ENCODE measurements at regions of chr15 and their contacts with region 1.

Region 1: GRCh38 chr15:90931737-90932659 is at the start of gene HDDC3:
- DNase-seq: peak; percentile 93
- H3K4me3 Mint-ChIP-seq: peak within 1 kb of the TSS; percentile 95
- H3K27ac Mint-ChIP-seq: peak within 1 kb of the TSS; percentile 96
- H3K4me1 Mint-ChIP-seq: peaks cover 35% of the 10 kb centered on the region
- H3K27me3 Mint-ChIP-seq: no peaks in the 10 kb centered on the region
- CTCF ChIP-seq: peak; percentile 87
- total RNA-seq, gene HDDC3: 23.6 and 25.5 TPM in 2 replicates

Region 2: DNA sequence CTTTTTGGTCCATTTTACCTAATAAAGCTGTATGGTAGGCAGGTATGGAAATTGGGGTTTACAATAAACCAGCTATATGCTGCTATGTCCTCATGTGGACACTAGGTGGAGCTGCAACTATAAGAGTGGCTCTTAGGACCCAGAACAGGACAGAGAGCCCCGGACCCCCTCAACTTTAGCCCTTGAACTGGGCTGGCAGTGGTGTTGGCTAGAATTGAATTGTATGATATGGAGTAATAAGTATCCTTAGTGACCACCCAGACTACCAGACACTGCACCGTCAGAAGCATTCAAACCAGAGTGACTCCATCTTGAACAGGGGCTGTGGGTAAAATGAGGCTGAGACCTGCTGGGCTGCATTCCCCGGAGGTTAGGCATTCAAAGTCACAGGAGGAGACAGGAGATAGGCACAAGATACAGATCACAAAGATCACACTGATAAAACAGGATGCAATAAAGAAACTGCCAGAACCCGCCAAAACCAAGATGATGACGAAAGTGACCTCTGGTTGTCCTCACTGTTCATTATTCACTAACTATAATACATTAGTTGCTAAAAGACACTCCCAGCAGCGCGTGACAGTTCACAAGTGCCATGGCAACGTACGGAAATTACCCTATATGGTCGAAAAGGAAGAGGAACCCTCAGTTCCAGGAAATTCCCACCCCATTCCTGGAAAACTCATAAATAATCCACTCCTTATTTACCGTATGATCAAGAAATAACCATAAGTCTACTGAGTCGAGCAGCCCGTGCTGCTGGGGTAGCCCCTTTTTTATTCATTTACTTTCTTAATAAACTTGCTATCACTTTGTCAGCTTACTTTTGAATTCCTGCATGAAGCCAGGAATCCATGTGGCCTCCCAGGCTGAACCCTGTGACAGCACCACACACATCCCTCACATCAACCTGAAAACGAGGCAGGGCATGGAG is 283.6 kb before region 1 on chr15:
- CTCF ChIA-PET with region 1: interaction called, 13 read pairs
- POLR2A ChIA-PET with region 1: interaction called, 5 read pairs
- intact Hi-C with region 1: loop called (anchors 5 kb)
- DNase-seq: peak; percentile 78
- H3K4me3 Mint-ChIP-seq: peak overlapping the region; percentile 20
- H3K27ac Mint-ChIP-seq: no peak overlapping the region
- H3K4me1 Mint-ChIP-seq: peaks cover 7% of the 10 kb centered on the region
- H3K27me3 Mint-ChIP-seq: no peaks in the 10 kb centered on the region
- CTCF ChIP-seq: peak; percentile 90

Region 3: GRCh38 chr15:90902040-90902839 is 29.8 kb before region 1 on chr15:
- CTCF ChIA-PET with region 1: interaction called, 131 read pairs
- POLR2A ChIA-PET with region 1: interaction called, 150 read pairs
- intact Hi-C with region 1: loop called (anchors 1 kb)
- DNase-seq: peak; percentile 81
- H3K4me3 Mint-ChIP-seq: peak overlapping the region; percentile 82
- H3K27ac Mint-ChIP-seq: peak overlapping the region; percentile 57
- H3K4me1 Mint-ChIP-seq: peaks cover 10% of the 10 kb centered on the region
- H3K27me3 Mint-ChIP-seq: no peaks in the 10 kb centered on the region
- CTCF ChIP-seq: peak; percentile 62

Region 4: GRCh38 chr15:90954712-90955671 is 23.0 kb after region 1 on chr15 and contains the start of gene RCCD1:
- CTCF ChIA-PET with region 1: interaction called, 116 read pairs
- POLR2A ChIA-PET with region 1: interaction called, 15 read pairs
- intact Hi-C with region 1: loop called (anchors 2 kb)
- DNase-seq: peak; percentile 97
- H3K4me3 Mint-ChIP-seq: peak within 1 kb of the TSS; percentile 77
- H3K27ac Mint-ChIP-seq: peak within 1 kb of the TSS; percentile 84
- H3K4me1 Mint-ChIP-seq: peaks cover 10% of the 10 kb centered on the region
- H3K27me3 Mint-ChIP-seq: no peaks in the 10 kb centered on the region
- CTCF ChIP-seq: no peak
- total RNA-seq, gene RCCD1: 21.5 and 29.0 TPM in 2 replicates

Region 5: DNA sequence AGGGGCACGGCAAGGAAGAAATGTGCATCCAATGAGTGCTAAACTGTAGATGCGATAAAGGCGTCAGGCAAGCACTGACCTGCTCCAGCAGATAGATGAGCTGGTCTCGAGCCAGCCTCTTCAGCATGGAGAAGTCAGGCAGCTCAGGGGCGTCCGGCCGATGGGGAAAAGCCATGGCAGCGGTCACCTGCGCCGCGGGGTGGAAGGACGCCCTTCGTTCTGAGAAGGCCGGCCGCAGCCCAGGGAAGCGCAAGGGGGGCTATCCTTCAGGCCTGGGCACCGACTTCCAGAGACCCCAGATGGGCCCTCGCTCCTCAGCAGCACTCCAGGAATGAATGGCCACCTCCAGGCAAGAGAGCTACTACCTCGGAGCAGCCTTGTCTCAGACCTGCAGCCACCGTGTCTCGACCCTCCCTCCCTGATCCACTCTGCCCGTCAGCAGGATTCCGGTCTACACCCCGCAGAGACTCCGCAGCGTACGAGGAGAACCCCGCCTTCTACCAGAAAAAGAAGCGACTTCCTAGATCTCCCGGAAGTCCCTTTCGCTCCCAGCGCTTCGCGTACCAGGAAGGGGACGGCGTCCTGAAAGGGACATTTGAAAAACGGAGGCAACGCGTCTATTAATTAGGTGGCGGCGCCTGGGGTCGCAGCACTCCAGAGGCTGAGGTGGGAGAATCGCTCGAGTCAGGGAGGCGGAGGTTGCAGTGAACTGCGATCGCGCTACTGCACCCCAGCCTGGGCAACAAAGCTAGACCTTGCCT is 90.3 kb after region 1 on chr15 and contains the start of gene VPS33B:
- CTCF ChIA-PET with region 1: interaction called, 5 read pairs
- POLR2A ChIA-PET with region 1: interaction called, 11 read pairs
- intact Hi-C with region 1: no loop called
- DNase-seq: peak; percentile 87
- H3K4me3 Mint-ChIP-seq: peak within 1 kb of the TSS; percentile 83
- H3K27ac Mint-ChIP-seq: peak within 1 kb of the TSS; percentile 83
- H3K4me1 Mint-ChIP-seq: peaks cover 18% of the 10 kb centered on the region
- H3K27me3 Mint-ChIP-seq: no peaks in the 10 kb centered on the region
- CTCF ChIP-seq: no peak
- total RNA-seq, gene VPS33B: 11.7 and 12.6 TPM in 2 replicates

Region 6: GRCh38 chr15:91135201-91136130 is 203.5 kb after region 1 on chr15:
- CTCF ChIA-PET with region 1: no interaction called
- POLR2A ChIA-PET with region 1: no interaction called
- intact Hi-C with region 1: no loop called
- DNase-seq: no peak
- H3K4me3 Mint-ChIP-seq: no peak overlapping the region
- H3K27ac Mint-ChIP-seq: no peak overlapping the region
- H3K4me1 Mint-ChIP-seq: no peaks in the 10 kb centered on the region
- H3K27me3 Mint-ChIP-seq: peaks cover 8% of the 10 kb centered on the region
- CTCF ChIP-seq: no peak

Region 7: GRCh38 chr15:91182101-91182500 is 250.1 kb after region 1 on chr15:
- CTCF ChIA-PET with region 1: no interaction called
- POLR2A ChIA-PET with region 1: no interaction called
- intact Hi-C with region 1: no loop called
- DNase-seq: no peak
- H3K4me3 Mint-ChIP-seq: no peak overlapping the region
- H3K27ac Mint-ChIP-seq: no peak overlapping the region
- H3K4me1 Mint-ChIP-seq: no peaks in the 10 kb centered on the region
- H3K27me3 Mint-ChIP-seq: peaks cover 38% of the 10 kb centered on the region
- CTCF ChIP-seq: no peak

Region 8: DNA sequence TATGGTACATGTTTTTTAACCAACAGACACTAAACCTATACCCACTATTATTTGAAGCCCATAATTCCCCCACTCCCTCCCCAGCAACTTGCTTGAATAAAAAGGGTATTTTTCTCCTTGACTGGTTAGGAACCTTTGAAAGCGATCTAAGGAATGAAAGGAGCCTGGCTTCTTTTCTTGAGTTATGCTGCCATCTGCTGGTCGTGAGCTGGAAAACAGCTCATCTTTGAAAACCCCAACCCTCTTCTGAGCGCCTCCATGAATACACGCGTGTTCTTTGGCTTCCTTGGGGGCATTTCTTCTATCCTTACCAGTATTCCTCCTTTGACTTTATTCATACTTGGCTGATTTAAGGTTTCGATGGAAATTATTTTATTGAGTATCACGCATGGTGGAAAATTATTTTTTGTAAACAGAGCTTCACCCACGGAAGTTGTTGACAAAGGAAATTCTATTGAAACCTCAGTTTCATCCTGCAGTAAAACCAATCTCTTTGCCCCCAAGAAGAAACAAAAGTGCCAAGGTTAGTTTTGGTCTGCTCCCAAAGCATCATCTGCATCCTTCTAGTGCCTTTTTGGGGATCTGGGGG is 339.7 kb after region 1 on chr15:
- CTCF ChIA-PET with region 1: interaction called, 26 read pairs
- POLR2A ChIA-PET with region 1: no interaction called
- intact Hi-C with region 1: no loop called
- DNase-seq: peak; percentile 69
- H3K4me3 Mint-ChIP-seq: no peak overlapping the region
- H3K27ac Mint-ChIP-seq: no peak overlapping the region
- H3K4me1 Mint-ChIP-seq: peaks cover 9% of the 10 kb centered on the region
- H3K27me3 Mint-ChIP-seq: peaks cover 44% of the 10 kb centered on the region
- CTCF ChIP-seq: peak; percentile 85